ENCODE measurements at regions of chr9 and their contacts with region 1.

Region 1: GRCh38 chr9:127916665-127917613 is at the start of gene ST6GALNAC4:
- DNase-seq: peak; percentile 74 to 89
- ATAC-seq: peak; percentile 42 to 74
- H3K4me3 ChIP-seq: peak within 1 kb of the TSS; percentile 65
- H3K27ac ChIP-seq: peak within 1 kb of the TSS; percentile 82 to 90
- H3K4me1 ChIP-seq: peaks cover 72% of the 10 kb centered on the region
- CTCF ChIP-seq: no peak
- EP300 ChIP-seq: no peak
- POLR2A ChIP-seq: peak; percentile 43; the same call in 1 of the 2 replicates
- RAD21 ChIP-seq: no peak
- polyA plus RNA-seq, gene ST6GALNAC4: 11.0 and 12.5 TPM in 2 replicates

Region 2: GRCh38 chr9:127598839-127599548 is 317.9 kb before region 1 on chr9:
- CTCF ChIA-PET with region 1: interaction called, 31 read pairs
- POLR2A ChIA-PET with region 1: interaction called, 4 read pairs
- DNase-seq: no peak
- ATAC-seq: peak; percentile 24 to 47; a peak in 3 of 6 replicates
- H3K4me3 ChIP-seq: no peak overlapping the region
- H3K27ac ChIP-seq: no peak overlapping the region
- H3K4me1 ChIP-seq: peaks cover 5% of the 10 kb centered on the region; the same call in 1 of the 3 replicates
- CTCF ChIP-seq: no peak
- EP300 ChIP-seq: no peak
- POLR2A ChIP-seq: no peak
- RAD21 ChIP-seq: no peak

Region 3: DNA sequence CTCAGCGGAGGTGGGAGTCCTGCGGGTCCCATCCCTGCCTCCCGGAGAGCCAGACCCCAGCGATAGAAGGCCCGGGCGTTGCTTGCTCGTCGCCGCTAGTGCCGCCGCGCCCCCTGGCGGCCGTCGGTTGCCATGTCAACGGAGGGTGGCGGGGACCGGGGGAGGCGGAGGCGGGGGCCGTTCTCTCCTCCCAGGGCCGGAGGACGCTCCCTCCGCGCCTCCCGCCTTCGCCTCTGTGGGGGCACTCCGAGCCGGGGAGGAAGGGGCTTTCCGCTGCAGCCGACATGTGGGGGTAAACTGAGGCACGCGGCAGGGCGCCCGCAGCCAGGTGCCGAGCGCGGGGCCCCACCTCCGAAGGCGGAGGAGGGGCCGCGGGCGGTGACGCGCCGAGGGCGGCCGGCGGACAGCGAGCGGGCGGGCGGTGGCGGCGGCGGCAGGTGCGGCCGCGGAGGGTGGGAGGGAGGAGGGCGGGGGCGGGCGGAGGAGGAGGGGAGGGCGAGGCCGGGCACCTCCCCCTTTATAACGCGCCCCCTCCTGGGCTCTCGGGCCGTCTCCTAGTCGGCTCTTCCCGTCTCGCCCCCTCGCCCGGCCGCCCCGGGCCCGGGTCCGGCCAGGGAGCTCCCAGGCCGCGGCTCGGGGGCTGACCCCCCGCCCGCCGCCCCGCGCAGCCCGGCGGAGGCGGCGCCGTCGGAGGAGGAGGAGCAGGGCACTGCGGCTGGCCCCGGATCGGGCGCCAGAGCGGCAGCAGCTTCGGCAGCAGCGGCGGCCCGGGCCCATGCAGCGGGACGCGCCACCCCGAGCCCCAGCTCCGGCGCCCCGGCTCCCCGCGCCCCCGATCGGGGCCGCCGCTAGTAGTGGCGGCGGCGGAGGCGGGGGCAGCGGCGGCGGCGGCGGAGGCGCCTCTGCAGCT is 131.7 kb before region 1 on chr9:
- CTCF ChIA-PET with region 1: interaction called, 83 read pairs
- POLR2A ChIA-PET with region 1: no interaction called
- DNase-seq: peak; percentile 85 to 92
- ATAC-seq: peak; percentile 72 to 77
- H3K4me3 ChIP-seq: peak overlapping the region; percentile 88
- H3K27ac ChIP-seq: peak overlapping the region; percentile 94 to 99
- H3K4me1 ChIP-seq: peaks cover 11% of the 10 kb centered on the region; the same call in 2 of the 3 replicates
- CTCF ChIP-seq: peak; percentile 90
- EP300 ChIP-seq: no peak
- POLR2A ChIP-seq: peak; percentile 28
- RAD21 ChIP-seq: peak; percentile 76 to 96

Region 4: GRCh38 chr9:127828262-127829031 is 88.5 kb before region 1 on chr9:
- CTCF ChIA-PET with region 1: interaction called, 14 read pairs
- POLR2A ChIA-PET with region 1: no interaction called
- DNase-seq: peak; percentile 62 to 87
- ATAC-seq: peak; percentile 68 to 79
- H3K4me3 ChIP-seq: peak overlapping the region; percentile 32
- H3K27ac ChIP-seq: peak overlapping the region; percentile 66 to 77
- H3K4me1 ChIP-seq: peaks cover 9% of the 10 kb centered on the region
- CTCF ChIP-seq: no peak
- EP300 ChIP-seq: no peak
- POLR2A ChIP-seq: peak; percentile 24; the same call in 1 of the 2 replicates
- RAD21 ChIP-seq: no peak

Region 5: GRCh38 chr9:127930231-127931091 is 13.5 kb after region 1 on chr9 and contains the start of gene PIP5KL1:
- CTCF ChIA-PET with region 1: interaction called, 53 read pairs
- POLR2A ChIA-PET with region 1: interaction called, 5 read pairs
- DNase-seq: peak; percentile 89 to 95
- ATAC-seq: peak; percentile 72 to 86
- H3K4me3 ChIP-seq: peak within 1 kb of the TSS; percentile 54
- H3K27ac ChIP-seq: peak within 1 kb of the TSS; percentile 83 to 84
- H3K4me1 ChIP-seq: peaks cover 45% of the 10 kb centered on the region
- CTCF ChIP-seq: peak; percentile 10; the same call in 1 of the 3 replicates
- EP300 ChIP-seq: no peak
- POLR2A ChIP-seq: peak; percentile 13; the same call in 1 of the 2 replicates
- RAD21 ChIP-seq: no peak
- polyA plus RNA-seq, gene PIP5KL1: 1.8 and 2.4 TPM in 2 replicates

Region 6: GRCh38 chr9:128043467-128043868 is 126.5 kb after region 1 on chr9:
- CTCF ChIA-PET with region 1: no interaction called
- POLR2A ChIA-PET with region 1: no interaction called
- DNase-seq: no peak
- ATAC-seq: peak; percentile 73 to 83
- H3K4me3 ChIP-seq: no peak overlapping the region
- H3K27ac ChIP-seq: peak overlapping the region in 1 of 2 experiments; percentile 48; a peak in 4 of 6 replicates
- H3K4me1 ChIP-seq: no peaks in the 10 kb centered on the region; the same call in 2 of the 3 replicates
- CTCF ChIP-seq: no peak
- EP300 ChIP-seq: no peak
- POLR2A ChIP-seq: no peak
- RAD21 ChIP-seq: no peak

Region 7: GRCh38 chr9:128504485-128505413 is 587.8 kb after region 1 on chr9 and contains the start of gene GLE1:
- CTCF ChIA-PET with region 1: no interaction called
- POLR2A ChIA-PET with region 1: no interaction called
- DNase-seq: peak; percentile 94 to 98
- ATAC-seq: peak; percentile 94 to 98
- H3K4me3 ChIP-seq: peak within 1 kb of the TSS; percentile 74
- H3K27ac ChIP-seq: peak within 1 kb of the TSS; percentile 76 to 84
- H3K4me1 ChIP-seq: peaks cover 17% of the 10 kb centered on the region; the same call in 2 of the 3 replicates
- CTCF ChIP-seq: no peak
- EP300 ChIP-seq: no peak
- POLR2A ChIP-seq: peak; percentile 91
- RAD21 ChIP-seq: no peak
- polyA plus RNA-seq, gene GLE1: 41.2 and 49.2 TPM in 2 replicates

Measured in A549 (cell line).